Psoas muscle (tissue), 8 donors: ENCODE measurements at regions of chr13 and their contacts with region 1.

Region 1: GRCh38 chr13:87274209-87274819 is 396.9 kb upstream of the SLITRK5 start:
- DNase-seq: no peak
- ATAC-seq: no peak
- H3K4me3 ChIP-seq: no peak overlapping the region
- H3K27ac ChIP-seq: no peak overlapping the region
- H3K4me1 ChIP-seq: no peaks in the 10 kb centered on the region
- H3K27me3 ChIP-seq: no peaks in the 10 kb centered on the region
- CTCF ChIP-seq: peak; percentile 8

Region 2: DNA sequence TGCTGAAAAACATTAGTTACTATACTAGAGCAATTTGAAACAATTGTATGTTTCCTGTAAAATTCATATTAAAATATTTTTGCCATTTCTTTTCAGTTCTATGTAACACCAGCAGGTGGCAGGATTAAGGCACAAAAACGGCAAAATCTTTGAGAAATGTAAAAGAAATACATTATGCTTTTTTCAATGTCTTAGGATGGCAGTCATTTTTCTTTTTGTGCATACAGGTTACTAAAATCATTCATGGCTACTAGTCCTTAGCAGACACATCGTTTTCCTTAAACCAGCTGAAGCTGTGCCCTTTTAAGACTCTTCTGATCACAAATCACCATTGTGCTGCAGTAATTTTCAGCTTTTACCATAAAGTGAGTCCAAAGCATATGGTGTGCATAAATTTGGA is 403.9 kb before region 1 on chr13:
- intact Hi-C with region 1: loop called in 1 of 2 experiments (anchors 5 kb)
- DNase-seq: no peak
- ATAC-seq: no peak
- H3K4me3 ChIP-seq: no peak overlapping the region
- H3K27ac ChIP-seq: no peak overlapping the region
- H3K4me1 ChIP-seq: no peaks in the 10 kb centered on the region
- H3K27me3 ChIP-seq: no peaks in the 10 kb centered on the region
- CTCF ChIP-seq: no peak